Caco-2 (cell line): ENCODE measurements at regions of chr20 and their contacts with region 1.

Region 1: GRCh38 chr20:52001999-52002666 is 189.4 kb downstream of the ZFP64 start:
- DNase-seq: peak; percentile 59 to 70
- H3K4me3 ChIP-seq: 0 out of 2 replicates have a peak overlapping the region, but pooled peaks have one; percentile 3
- H3K4me3 Mint-ChIP-seq: peak overlapping the region; percentile 55
- H3K27ac Mint-ChIP-seq: peak overlapping the region; percentile 19
- H3K4me1 ChIP-seq: peaks cover 7% of the 10 kb centered on the region
- H3K4me1 Mint-ChIP-seq: peaks cover 16% of the 10 kb centered on the region
- H3K27me3 ChIP-seq: no peaks in the 10 kb centered on the region
- H3K27me3 Mint-ChIP-seq: no peaks in the 10 kb centered on the region
- CTCF ChIP-seq: peak; percentile 68 to 79

Region 2: GRCh38 chr20:52015155-52015554 is 13.0 kb after region 1 on chr20:
- CTCF ChIA-PET with region 1: interaction called, 5 read pairs
- POLR2A ChIA-PET with region 1: no interaction called
- intact Hi-C with region 1: loop called (anchors 1 kb)
- DNase-seq: peak in 1 of 2 experiments; percentile 63
- H3K4me3 ChIP-seq: no peak overlapping the region
- H3K4me3 Mint-ChIP-seq: peak overlapping the region; percentile 6
- H3K27ac Mint-ChIP-seq: peak overlapping the region; percentile 12
- H3K4me1 ChIP-seq: peaks cover 31% of the 10 kb centered on the region
- H3K4me1 Mint-ChIP-seq: peaks cover 36% of the 10 kb centered on the region
- H3K27me3 ChIP-seq: no peaks in the 10 kb centered on the region
- H3K27me3 Mint-ChIP-seq: no peaks in the 10 kb centered on the region
- CTCF ChIP-seq: no peak

Region 3: DNA sequence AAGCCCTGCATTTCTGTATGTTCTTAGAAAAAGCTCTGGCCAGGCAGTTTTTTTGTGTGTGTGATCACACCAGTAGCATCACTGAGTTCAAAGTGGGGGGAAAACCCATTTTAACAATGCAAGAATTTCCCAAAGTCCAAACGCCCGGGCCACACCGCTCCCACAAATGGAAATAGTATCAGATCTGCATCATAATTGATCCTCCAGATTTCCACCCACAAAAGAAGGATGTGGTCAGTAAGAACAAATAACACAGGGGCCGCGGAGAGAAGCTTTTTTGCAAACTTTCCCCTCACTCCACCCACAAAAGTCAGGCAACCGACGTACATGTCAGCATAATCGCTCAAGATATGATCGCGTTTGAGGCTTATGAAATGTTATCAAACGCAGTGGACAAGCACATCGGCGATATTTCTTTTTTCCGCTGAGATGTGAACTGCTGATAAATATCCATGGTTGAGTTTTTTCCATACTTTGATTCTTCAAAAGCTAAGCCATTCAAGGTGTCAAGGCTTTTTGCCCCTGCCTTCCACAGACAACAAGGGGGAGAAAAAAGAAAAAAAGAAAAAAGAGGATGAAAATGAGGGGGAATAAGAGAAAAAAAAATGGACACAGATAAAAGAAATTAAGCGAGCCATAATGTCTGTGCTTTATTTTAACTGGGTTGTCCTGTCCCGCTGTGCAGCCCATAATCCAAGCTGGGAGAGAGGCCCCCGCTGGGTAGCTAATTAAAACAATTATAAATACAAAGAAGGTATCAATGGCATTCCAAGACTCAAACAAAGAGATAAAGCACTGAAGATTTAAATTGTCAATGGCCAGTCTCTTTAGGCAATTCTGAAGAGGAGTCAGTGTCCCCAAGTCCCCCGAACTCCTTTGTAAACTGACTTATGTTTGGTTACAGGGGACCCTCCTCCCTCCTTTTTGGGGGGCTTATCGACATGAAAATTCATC is 46.0 kb after region 1 on chr20:
- CTCF ChIA-PET with region 1: no interaction called
- POLR2A ChIA-PET with region 1: no interaction called
- intact Hi-C with region 1: loop called (anchors 5 kb)
- DNase-seq: no peak
- H3K4me3 ChIP-seq: no peak overlapping the region
- H3K4me3 Mint-ChIP-seq: no peak overlapping the region
- H3K27ac Mint-ChIP-seq: peak overlapping the region; percentile 91
- H3K4me1 ChIP-seq: peaks cover 22% of the 10 kb centered on the region
- H3K4me1 Mint-ChIP-seq: peaks cover 23% of the 10 kb centered on the region
- H3K27me3 ChIP-seq: no peaks in the 10 kb centered on the region
- H3K27me3 Mint-ChIP-seq: no peaks in the 10 kb centered on the region
- CTCF ChIP-seq: no peak